ENCODE measurements at regions of chr9 and their contacts with region 1.

Region 1: GRCh38 chr9:96667361-96667728 is 12.2 kb upstream of the PRXL2C start:
- DNase-seq: no peak
- H3K4me3 Mint-ChIP-seq: no peak overlapping the region
- H3K27ac Mint-ChIP-seq: no peak overlapping the region
- H3K4me1 Mint-ChIP-seq: no peaks in the 10 kb centered on the region
- H3K27me3 Mint-ChIP-seq: peaks cover 9% of the 10 kb centered on the region

Region 2: DNA sequence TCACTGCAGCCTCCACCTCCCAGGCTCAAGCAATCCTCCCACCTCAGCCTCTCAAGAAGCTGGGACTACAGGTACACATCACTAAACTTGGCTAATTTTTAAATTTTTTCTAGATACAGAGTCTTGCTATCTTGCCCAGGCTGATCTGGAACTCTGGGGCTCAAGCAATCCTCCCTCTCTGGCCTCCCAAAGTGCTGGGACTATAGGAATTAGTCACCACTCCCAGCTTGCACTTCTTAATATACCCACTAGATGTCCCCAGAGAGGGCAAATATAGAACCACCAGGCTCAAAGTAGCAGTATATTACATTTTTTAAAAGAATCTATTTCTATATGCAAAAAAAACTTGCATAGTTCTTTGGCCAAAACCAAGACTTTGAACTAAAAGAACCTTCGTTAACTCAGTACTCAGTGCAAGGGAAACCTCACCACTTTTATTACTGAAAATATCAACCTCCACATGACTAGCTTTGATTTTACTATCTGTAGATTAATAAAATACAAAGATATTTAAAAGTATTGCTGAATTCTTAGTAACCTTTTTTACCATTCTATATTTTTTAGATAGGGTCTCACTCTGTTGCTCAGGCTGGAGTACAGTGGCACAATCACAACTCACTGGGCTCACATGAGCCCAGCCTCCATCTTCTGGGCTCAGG is 339.5 kb before region 1 on chr9:
- intact Hi-C with region 1: loop called (anchors 1 kb)
- DNase-seq: peak; percentile 6
- H3K4me3 Mint-ChIP-seq: no peak overlapping the region
- H3K27ac Mint-ChIP-seq: no peak overlapping the region
- H3K4me1 Mint-ChIP-seq: no peaks in the 10 kb centered on the region
- H3K27me3 Mint-ChIP-seq: peaks cover 5% of the 10 kb centered on the region

Region 3: GRCh38 chr9:96441798-96442445 is 225.4 kb before region 1 on chr9:
- intact Hi-C with region 1: loop called (anchors 1 kb)
- DNase-seq: peak; percentile 16
- H3K4me3 Mint-ChIP-seq: no peak overlapping the region
- H3K27ac Mint-ChIP-seq: no peak overlapping the region
- H3K4me1 Mint-ChIP-seq: no peaks in the 10 kb centered on the region
- H3K27me3 Mint-ChIP-seq: peaks cover 8% of the 10 kb centered on the region

Region 4: DNA sequence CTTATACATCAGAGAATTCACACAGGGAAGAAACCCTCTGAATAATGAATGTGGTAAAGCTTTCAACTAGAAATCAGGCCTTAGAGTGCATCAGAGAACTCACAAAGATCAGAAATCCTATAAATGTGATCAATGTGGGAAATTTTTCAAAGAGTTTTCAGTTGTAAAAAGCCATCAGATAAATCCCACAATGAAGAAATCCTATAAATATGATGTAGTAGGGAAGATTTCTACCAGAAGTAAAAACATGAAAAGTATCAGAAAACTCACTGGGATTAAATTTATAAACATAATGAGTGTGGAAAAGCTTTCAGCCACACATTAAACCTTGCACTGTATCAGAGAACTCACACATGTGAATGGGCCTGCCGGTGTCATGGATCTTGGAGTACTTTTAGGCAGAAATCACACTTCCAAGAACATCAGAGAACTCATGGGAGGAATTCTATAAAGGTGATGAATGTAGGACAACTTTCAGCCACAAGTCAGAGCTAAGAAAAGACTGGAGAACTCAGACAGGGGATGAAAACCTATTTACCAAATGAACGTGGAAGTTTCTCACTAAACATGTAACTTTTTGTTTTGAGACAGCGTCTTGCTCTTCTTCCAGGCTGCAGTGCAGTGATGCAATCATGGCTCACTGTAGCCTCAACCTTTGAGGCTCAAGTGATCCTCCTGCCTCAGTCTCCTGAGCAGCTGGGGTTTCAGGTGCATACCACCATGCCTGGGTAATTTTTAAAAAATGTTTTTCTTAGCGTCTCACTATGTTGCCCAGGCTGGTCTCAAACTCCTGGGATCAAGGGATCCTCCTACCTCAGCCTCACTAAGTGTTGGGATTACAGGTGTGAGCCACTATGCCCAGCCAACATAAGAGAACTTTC is 71.0 kb after region 1 on chr9:
- intact Hi-C with region 1: no loop called
- DNase-seq: no peak
- H3K4me3 Mint-ChIP-seq: no peak overlapping the region
- H3K27ac Mint-ChIP-seq: no peak overlapping the region
- H3K4me1 Mint-ChIP-seq: no peaks in the 10 kb centered on the region
- H3K27me3 Mint-ChIP-seq: no peaks in the 10 kb centered on the region